ENCODE measurements at regions of chr1 and their contacts with region 1.

Region 1: GRCh38 chr1:178282949-178283367 is 189.1 kb downstream of the RASAL2 start:
- DNase-seq: peak; percentile 85
- H3K4me3 Mint-ChIP-seq: no peak overlapping the region
- H3K27ac Mint-ChIP-seq: peak overlapping the region; percentile 28
- H3K4me1 Mint-ChIP-seq: peaks cover 38% of the 10 kb centered on the region
- H3K27me3 Mint-ChIP-seq: no peaks in the 10 kb centered on the region
- CTCF ChIP-seq: peak; percentile 77

Region 2: DNA sequence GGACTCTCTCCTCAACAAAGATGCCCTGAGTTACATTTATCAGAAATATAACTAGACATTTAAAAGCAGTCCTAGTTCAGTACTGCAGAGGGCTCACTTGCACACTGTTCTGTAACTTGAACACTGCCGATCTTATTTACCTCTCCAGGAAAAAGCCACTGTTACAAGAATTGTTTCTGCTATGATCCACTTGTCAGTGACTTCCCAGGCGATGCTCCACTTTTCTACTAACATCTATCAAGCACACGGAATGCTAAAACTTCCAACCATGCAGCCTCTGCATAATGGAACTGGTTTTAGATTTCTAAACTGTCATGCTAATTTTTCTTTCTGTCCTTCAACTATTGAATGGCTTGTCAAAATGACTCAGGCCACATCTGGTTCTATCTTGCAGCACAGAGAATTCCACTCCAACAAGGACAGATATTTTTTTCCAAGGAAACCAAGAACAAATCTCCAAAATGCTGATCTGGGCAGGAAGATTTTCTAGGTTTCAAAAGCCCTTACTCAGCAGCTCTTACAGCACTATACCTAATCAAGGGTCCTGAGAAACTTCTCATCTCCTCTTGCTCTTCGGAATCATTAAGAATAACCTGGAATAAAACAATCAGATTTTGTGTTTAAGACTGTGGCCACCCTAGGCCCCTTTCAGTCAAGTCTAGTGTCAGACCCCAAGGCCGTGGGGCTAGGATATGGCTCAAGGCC is 323.0 kb before region 1 on chr1:
- CTCF ChIA-PET with region 1: interaction called, 64 read pairs
- POLR2A ChIA-PET with region 1: interaction called, 3 read pairs
- intact Hi-C with region 1: loop called (anchors 1 kb)
- DNase-seq: peak; percentile 50
- H3K4me3 Mint-ChIP-seq: no peak overlapping the region
- H3K27ac Mint-ChIP-seq: no peak overlapping the region
- H3K4me1 Mint-ChIP-seq: peaks cover 6% of the 10 kb centered on the region
- H3K27me3 Mint-ChIP-seq: no peaks in the 10 kb centered on the region
- CTCF ChIP-seq: peak; percentile 74

Region 3: DNA sequence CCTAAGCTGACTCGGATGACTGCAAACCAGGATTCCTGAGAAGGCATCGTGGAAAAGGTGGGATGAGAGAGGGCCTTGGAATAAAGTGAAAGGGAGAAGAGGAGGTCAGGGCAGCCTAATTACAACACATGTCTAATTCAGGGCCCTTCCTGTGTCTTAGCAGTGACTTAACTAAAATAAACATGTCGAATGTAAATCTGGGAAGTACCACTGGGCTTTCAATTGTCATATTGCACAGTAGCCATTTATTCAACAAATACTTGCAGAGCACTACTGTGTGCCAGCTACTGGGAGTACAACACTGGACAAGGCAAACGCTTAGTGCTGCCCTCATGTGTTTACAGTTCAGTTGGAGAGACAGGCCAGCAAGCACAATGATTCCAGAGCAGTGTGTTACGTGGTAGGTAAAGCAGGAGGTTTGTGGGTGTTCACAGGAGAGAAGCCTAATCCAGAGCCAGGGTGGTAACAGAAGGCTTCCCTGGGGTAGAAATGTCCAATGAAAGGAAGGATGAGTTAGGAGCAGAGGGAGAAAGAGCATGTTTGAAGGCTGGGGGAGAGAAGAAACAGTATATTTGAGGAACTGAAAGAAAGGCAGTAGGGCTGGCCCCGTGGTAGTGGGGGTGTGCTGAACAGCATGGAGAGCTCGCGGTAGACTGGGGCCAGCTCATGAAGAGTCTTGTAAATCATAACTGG is 227.0 kb before region 1 on chr1:
- CTCF ChIA-PET with region 1: interaction called, 47 read pairs
- POLR2A ChIA-PET with region 1: interaction called, 6 read pairs
- intact Hi-C with region 1: loop called (anchors 1 kb)
- DNase-seq: peak; percentile 77
- H3K4me3 Mint-ChIP-seq: no peak overlapping the region
- H3K27ac Mint-ChIP-seq: peak overlapping the region; percentile 14
- H3K4me1 Mint-ChIP-seq: peaks cover 50% of the 10 kb centered on the region
- H3K27me3 Mint-ChIP-seq: no peaks in the 10 kb centered on the region
- CTCF ChIP-seq: no peak

Region 4: GRCh38 chr1:178166429-178167024 is 116.4 kb before region 1 on chr1:
- CTCF ChIA-PET with region 1: no interaction called
- POLR2A ChIA-PET with region 1: no interaction called
- intact Hi-C with region 1: no loop called
- DNase-seq: no peak
- H3K4me3 Mint-ChIP-seq: no peak overlapping the region
- H3K27ac Mint-ChIP-seq: no peak overlapping the region
- H3K4me1 Mint-ChIP-seq: peaks cover 25% of the 10 kb centered on the region
- H3K27me3 Mint-ChIP-seq: no peaks in the 10 kb centered on the region
- CTCF ChIP-seq: no peak

Region 5: DNA sequence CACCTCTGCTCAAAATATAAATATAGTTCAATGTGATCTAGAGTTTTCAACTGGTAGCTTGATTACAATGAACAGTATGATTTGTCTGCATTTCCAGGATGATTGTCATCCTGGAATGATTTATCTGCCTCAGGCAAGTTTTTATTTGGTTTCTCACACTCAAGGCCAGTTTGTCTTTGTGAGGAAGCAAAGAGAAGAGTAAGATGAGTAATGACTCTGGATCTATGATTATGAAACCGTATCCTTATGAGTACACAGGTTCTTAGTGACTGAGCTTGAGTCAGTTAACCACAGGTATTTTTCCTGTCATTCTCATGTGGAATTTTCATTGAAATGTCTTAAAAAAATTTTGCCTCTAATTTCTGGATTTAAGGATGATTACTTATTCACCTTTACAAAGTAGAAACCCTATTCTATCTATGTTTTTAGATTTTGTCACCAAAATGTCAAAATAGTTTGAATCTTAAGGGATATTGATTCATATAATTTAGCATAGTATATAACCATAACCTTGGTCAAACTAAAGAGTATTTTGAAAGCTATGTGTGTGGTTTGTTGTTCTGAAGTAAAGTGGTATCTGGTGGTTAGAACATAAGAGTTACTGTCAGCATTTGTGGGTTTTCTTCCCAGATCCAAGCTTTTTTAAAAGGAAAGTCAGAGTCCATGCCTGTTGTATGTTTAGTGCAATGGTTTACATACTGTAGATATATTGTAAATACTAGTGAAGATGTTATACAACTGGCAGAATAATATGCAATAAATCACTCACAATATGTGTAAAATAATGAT is 44.0 kb before region 1 on chr1:
- CTCF ChIA-PET with region 1: interaction called, 5 read pairs
- POLR2A ChIA-PET with region 1: interaction called, 7 read pairs
- intact Hi-C with region 1: loop called (anchors 2 kb)
- DNase-seq: peak; percentile 100
- H3K4me3 Mint-ChIP-seq: peak overlapping the region; percentile 57
- H3K27ac Mint-ChIP-seq: peak overlapping the region; percentile 96
- H3K4me1 Mint-ChIP-seq: peaks cover 69% of the 10 kb centered on the region
- H3K27me3 Mint-ChIP-seq: no peaks in the 10 kb centered on the region
- CTCF ChIP-seq: no peak

Region 6: DNA sequence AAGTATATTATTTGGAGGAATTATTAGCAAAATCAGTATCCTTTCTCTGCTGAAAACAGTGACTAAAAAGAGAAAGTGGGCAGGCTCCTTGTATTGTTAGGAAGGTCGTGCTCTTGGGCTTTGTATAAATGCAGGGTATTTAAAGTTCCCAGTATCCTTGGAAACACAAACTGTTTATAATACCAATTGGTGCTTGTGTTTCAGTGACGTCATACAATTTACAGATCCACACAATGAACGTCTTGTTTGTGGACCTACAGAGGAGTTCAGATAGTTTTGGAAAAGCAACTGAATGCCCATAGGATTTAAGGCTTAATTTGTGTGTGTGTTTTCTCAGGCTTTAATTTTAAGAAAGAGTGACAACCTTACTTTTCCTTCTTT is 20.8 kb before region 1 on chr1:
- CTCF ChIA-PET with region 1: interaction called, 14 read pairs
- POLR2A ChIA-PET with region 1: no interaction called
- intact Hi-C with region 1: loop called (anchors 2 kb)
- DNase-seq: no peak
- H3K4me3 Mint-ChIP-seq: no peak overlapping the region
- H3K27ac Mint-ChIP-seq: peak overlapping the region; percentile 21
- H3K4me1 Mint-ChIP-seq: peaks cover 12% of the 10 kb centered on the region
- H3K27me3 Mint-ChIP-seq: no peaks in the 10 kb centered on the region
- CTCF ChIP-seq: no peak

Region 7: DNA sequence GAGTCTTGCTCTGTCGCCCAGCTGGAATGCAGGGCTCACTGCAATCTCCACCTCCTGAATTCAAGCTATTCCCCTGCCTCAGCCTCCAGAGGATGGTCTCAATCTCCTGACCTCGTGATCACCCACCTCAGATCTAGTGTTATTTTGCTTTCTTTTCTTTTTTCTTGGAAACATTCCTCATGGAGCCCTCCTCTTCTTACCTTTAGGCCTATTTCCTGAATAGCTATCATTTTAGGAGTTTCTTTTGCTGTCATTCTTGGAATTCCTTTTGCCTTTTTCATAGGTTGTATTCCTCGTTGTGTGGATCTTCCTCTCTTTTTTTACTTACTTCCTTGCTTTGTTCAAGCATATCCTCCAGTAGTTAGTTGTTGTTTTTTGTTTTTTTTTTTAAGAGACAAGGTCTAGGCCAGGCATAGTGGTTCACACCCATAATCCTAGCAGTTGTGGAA is 15.3 kb before region 1 on chr1:
- CTCF ChIA-PET with region 1: interaction called, 20 read pairs
- POLR2A ChIA-PET with region 1: interaction called, 4 read pairs
- intact Hi-C with region 1: loop called (anchors 2 kb)
- DNase-seq: no peak
- H3K4me3 Mint-ChIP-seq: peak overlapping the region; percentile 26
- H3K27ac Mint-ChIP-seq: peak overlapping the region; percentile 87
- H3K4me1 Mint-ChIP-seq: peaks cover 37% of the 10 kb centered on the region
- H3K27me3 Mint-ChIP-seq: no peaks in the 10 kb centered on the region
- CTCF ChIP-seq: no peak

Region 8: GRCh38 chr1:178294654-178295053 is 11.7 kb after region 1 on chr1:
- CTCF ChIA-PET with region 1: interaction called, 41 read pairs
- POLR2A ChIA-PET with region 1: interaction called, 4 read pairs
- intact Hi-C with region 1: no loop called
- DNase-seq: no peak
- H3K4me3 Mint-ChIP-seq: no peak overlapping the region
- H3K27ac Mint-ChIP-seq: no peak overlapping the region
- H3K4me1 Mint-ChIP-seq: peaks cover 7% of the 10 kb centered on the region
- H3K27me3 Mint-ChIP-seq: no peaks in the 10 kb centered on the region
- CTCF ChIP-seq: no peak

Region 9: DNA sequence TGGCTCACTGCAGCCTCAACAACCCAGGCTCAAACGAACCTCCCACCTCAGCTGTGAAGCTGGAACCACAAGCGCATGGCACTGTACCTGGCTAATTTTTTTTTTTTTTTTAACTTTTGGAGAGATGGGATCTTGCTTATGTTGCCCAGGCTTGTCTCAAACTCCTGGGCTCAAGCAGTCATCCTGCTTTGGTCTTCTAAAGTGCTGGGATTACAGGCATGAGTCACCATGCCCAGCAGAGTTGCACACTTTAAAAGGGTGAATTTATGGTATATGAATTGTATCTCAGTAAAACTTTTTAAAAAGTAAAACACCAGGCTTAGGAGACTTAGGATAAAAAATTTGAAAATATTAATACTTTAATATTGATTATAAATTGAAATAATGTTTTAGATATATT is 114.7 kb after region 1 on chr1:
- CTCF ChIA-PET with region 1: no interaction called
- POLR2A ChIA-PET with region 1: no interaction called
- intact Hi-C with region 1: no loop called
- DNase-seq: peak; percentile 84
- H3K4me3 Mint-ChIP-seq: no peak overlapping the region
- H3K27ac Mint-ChIP-seq: peak overlapping the region; percentile 28
- H3K4me1 Mint-ChIP-seq: peaks cover 28% of the 10 kb centered on the region
- H3K27me3 Mint-ChIP-seq: no peaks in the 10 kb centered on the region
- CTCF ChIP-seq: no peak

Region 10: GRCh38 chr1:179002552-179003345 is 719.8 kb after region 1 on chr1:
- CTCF ChIA-PET with region 1: no interaction called
- POLR2A ChIA-PET with region 1: no interaction called
- intact Hi-C with region 1: no loop called
- DNase-seq: peak; percentile 80
- H3K4me3 Mint-ChIP-seq: no peak overlapping the region
- H3K27ac Mint-ChIP-seq: peak overlapping the region; percentile 1
- H3K4me1 Mint-ChIP-seq: peaks cover 4% of the 10 kb centered on the region
- H3K27me3 Mint-ChIP-seq: no peaks in the 10 kb centered on the region
- CTCF ChIP-seq: peak; percentile 100

Measured in MCF 10A (cell line).